Panc1 (cell line): ENCODE measurements at regions of chr21 and their contacts with region 1.

Region 1: GRCh38 chr21:14877570-14878228 is 187.1 kb downstream of the NRIP1 start:
- DNase-seq: no peak
- ATAC-seq: peak; percentile 81
- H3K4me3 ChIP-seq: no peak overlapping the region
- H3K27ac ChIP-seq: peak overlapping the region; percentile 85
- H3K4me1 ChIP-seq: peaks cover 19% of the 10 kb centered on the region
- H3K27me3 ChIP-seq: no peaks in the 10 kb centered on the region
- CTCF ChIP-seq: no peak

Region 2: GRCh38 chr21:15064576-15065391 is 187.1 kb after region 1 on chr21 and contains the start of gene NRIP1:
- CTCF ChIA-PET with region 1: no interaction called
- POLR2A ChIA-PET with region 1: no interaction called
- in situ Hi-C with region 1: no loop called
- intact Hi-C with region 1: loop called (anchors 10 kb)
- DNase-seq: no peak
- ATAC-seq: peak; percentile 92
- H3K4me3 ChIP-seq: peak within 1 kb of the TSS; percentile 62 to 84
- H3K27ac ChIP-seq: peak within 1 kb of the TSS; percentile 78
- H3K4me1 ChIP-seq: peaks cover 23% of the 10 kb centered on the region
- H3K27me3 ChIP-seq: no peaks in the 10 kb centered on the region
- CTCF ChIP-seq: no peak
- total RNA-seq, gene NRIP1: 19.1 TPM